AG04449 (cell line): ENCODE measurements at regions of chr11 and their contacts with region 1.

Region 1: DNA sequence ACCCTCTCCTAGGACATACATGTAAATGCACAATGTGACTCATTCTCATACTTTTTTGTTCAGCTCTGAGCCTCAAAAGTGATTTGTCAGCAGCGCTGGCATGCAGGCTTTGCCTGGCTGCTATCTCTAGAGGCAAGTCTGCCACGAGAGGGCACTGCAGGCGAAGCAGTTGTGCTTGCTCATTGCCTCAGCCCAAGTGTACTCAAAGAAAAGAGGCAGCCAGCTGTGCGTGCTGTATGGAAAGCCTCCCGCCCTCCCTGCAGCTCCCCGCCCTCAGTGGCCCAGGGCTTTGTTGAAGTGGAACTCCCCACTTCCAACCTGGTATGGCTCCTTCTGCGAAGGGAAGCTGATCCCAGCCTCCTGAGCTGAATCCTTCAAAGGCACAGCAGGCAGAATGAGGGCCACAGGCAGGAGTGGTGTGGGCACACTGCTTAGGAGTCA is 16.3 kb downstream of the SDHAF2 start:
- DNase-seq: peak; percentile 83
- H3K4me3 ChIP-seq: no peak overlapping the region
- CTCF ChIP-seq: peak; percentile 95

Region 2: GRCh38 chr11:61460474-61460881 is 14.2 kb after region 1 on chr11:
- CTCF ChIA-PET with region 1: interaction called, 106 read pairs
- POLR2A ChIA-PET with region 1: interaction called, 3 read pairs
- DNase-seq: no peak
- H3K4me3 ChIP-seq: no peak overlapping the region
- CTCF ChIP-seq: no peak

Region 3: DNA sequence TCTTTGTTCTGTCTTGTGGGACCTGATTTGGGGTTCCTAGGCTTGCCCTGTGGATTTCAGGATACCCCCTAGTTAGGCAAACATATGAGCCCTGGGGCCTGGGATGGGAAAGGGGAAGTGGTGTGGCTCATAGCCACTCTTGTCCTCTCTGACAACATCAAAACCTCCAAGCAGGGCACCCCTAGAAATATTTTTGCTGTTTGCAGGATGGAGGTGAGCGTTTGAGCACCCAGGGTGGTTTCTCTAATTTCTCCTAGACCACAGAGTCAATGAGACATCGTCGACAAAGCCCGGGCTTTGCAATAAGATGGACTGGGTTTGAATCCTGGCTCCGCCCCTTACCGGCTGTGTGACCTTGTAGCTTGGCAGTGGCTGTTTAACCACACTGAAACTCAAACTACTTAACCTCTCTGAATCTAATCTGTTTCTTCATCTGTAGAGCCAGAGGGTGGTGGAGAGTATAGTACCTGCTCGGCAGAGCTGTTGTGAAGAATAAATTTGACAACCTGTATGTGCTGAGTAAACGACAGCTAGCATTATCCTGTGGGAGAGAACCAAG is 57.1 kb after region 1 on chr11:
- CTCF ChIA-PET with region 1: interaction called, 10 read pairs
- POLR2A ChIA-PET with region 1: no interaction called
- DNase-seq: no peak
- H3K4me3 ChIP-seq: no peak overlapping the region
- CTCF ChIP-seq: no peak

Region 4: DNA sequence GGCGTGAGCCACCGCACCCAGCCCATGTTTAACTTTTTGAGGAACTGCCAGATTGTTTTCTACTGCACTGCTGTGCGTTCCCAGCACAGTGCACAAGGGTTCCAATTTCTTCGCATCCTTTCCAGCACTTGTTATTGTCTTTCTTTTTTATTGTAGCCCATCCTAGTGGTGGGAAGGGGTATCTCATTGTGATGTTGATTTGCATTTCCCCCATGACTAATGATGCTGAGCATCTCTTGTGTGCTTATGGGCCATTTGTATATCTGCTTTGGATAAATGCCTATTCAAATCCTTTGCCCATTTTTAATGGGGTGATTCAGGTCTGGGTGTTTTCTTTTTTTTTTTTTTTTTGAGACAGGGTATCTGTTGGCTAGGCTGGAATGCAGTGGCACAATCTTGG is 171.3 kb after region 1 on chr11:
- CTCF ChIA-PET with region 1: interaction called, 17 read pairs
- POLR2A ChIA-PET with region 1: no interaction called
- DNase-seq: no peak
- H3K4me3 ChIP-seq: no peak overlapping the region
- CTCF ChIP-seq: no peak

Region 5: DNA sequence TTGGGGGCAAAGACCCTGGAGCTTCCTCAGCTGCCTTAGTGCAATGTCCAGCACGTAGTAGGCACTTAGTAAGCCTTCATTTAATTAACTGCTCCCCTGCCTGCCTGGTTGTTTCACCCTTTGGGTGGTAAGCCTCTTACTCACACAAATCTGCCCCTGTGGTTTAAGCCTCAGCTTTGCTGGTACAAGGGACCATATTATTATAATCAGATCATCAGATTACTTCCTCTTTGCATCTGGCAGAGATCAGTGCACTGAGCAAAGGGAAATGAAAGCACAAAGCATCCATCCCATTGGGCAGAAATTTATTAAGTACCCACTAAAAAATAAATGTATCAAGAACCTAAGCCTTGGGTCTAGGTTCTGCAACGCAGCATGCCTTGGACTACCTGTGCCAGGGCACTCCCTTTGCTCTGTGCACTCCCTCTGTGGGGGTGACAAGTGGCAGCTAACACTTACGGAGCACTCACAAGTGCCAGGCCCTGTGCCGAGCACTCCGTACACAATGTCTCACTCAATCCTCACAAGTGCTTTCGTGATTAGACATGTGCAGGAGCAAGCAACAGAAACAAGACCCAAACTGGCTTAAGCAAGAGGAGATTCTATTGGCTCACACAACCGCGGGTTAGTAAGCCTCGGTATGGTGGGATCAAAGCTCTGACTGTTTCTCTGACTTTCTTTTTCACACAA is 199.1 kb after region 1 on chr11:
- CTCF ChIA-PET with region 1: interaction called, 283 read pairs
- POLR2A ChIA-PET with region 1: no interaction called
- DNase-seq: no peak
- H3K4me3 ChIP-seq: no peak overlapping the region
- CTCF ChIP-seq: no peak